ENCODE measurements at regions of chr2 and their contacts with region 1.

Region 1: GRCh38 chr2:147843864-147844696 is 749 bp upstream of the ACVR2A start:
- DNase-seq: peak; percentile 78
- H3K4me3 Mint-ChIP-seq: peak overlapping the region; percentile 82
- H3K27ac Mint-ChIP-seq: no peak overlapping the region
- H3K4me1 Mint-ChIP-seq: peaks cover 18% of the 10 kb centered on the region
- H3K27me3 Mint-ChIP-seq: peaks cover 71% of the 10 kb centered on the region

Region 2: GRCh38 chr2:147499785-147500184 is 344.3 kb before region 1 on chr2:
- intact Hi-C with region 1: loop called (anchors 10 kb)
- DNase-seq: no peak
- H3K4me3 Mint-ChIP-seq: peak overlapping the region; percentile 51
- H3K27ac Mint-ChIP-seq: peak overlapping the region; percentile 91
- H3K4me1 Mint-ChIP-seq: peaks cover 61% of the 10 kb centered on the region
- H3K27me3 Mint-ChIP-seq: no peaks in the 10 kb centered on the region

Region 3: DNA sequence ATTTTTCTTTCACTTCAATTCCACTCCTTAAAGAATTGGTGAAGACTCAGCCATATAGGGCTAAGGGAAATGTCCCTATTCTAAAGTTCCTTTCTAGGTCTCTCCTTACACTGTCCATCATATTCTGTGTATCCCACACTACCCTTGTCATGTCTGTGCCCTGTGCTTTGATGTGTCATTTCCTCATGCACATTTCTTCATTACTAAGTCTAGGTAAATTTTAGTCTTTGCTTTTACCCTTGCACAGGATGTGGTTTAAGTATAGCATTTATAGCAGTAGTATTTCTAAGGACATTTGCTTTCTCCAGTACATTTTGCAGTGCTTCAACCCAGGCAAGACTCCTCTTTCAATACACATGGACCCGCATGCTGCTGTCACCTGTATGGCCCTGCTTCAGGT is 220.8 kb before region 1 on chr2:
- intact Hi-C with region 1: loop called (anchors 10 kb)
- DNase-seq: no peak
- H3K4me3 Mint-ChIP-seq: no peak overlapping the region
- H3K27ac Mint-ChIP-seq: peak overlapping the region; percentile 64
- H3K4me1 Mint-ChIP-seq: peaks cover 29% of the 10 kb centered on the region
- H3K27me3 Mint-ChIP-seq: peaks cover 1% of the 10 kb centered on the region

Region 4: GRCh38 chr2:147663153-147663961 is 180.7 kb before region 1 on chr2:
- intact Hi-C with region 1: loop called (anchors 2 kb)
- DNase-seq: peak; percentile 21
- H3K4me3 Mint-ChIP-seq: peak overlapping the region; percentile 47
- H3K27ac Mint-ChIP-seq: peak overlapping the region; percentile 54
- H3K4me1 Mint-ChIP-seq: peaks cover 37% of the 10 kb centered on the region
- H3K27me3 Mint-ChIP-seq: peaks cover 4% of the 10 kb centered on the region

Region 5: GRCh38 chr2:147952118-147952517 is 108.0 kb after region 1 on chr2:
- intact Hi-C with region 1: no loop called
- DNase-seq: no peak
- H3K4me3 Mint-ChIP-seq: no peak overlapping the region
- H3K27ac Mint-ChIP-seq: no peak overlapping the region
- H3K4me1 Mint-ChIP-seq: no peaks in the 10 kb centered on the region
- H3K27me3 Mint-ChIP-seq: no peaks in the 10 kb centered on the region

Region 6: GRCh38 chr2:148020111-148021058 is 176.3 kb after region 1 on chr2 and contains the start of gene ORC4:
- intact Hi-C with region 1: loop called (anchors 5 kb)
- DNase-seq: peak; percentile 94
- H3K4me3 Mint-ChIP-seq: peak within 1 kb of the TSS; percentile 100
- H3K27ac Mint-ChIP-seq: peak within 1 kb of the TSS; percentile 93
- H3K4me1 Mint-ChIP-seq: peaks cover 44% of the 10 kb centered on the region
- H3K27me3 Mint-ChIP-seq: no peaks in the 10 kb centered on the region
- total RNA-seq, gene ORC4: 25.4 and 31.2 TPM in 2 replicates

Measured in activated T-helper 2 cell treated with anti-CD3 and anti-CD28 coated beads, Interferon-gamma antibody, Interleukin-2, Interleukin-4, amounts not matched to agents 10 μg/mL and 5 μg/mL and 100 μg/mL, durations not matched to agents 14 hours and 24 hours and 36 hours (primary cell).